AG04449 (cell line): ENCODE measurements at regions of chr10 and their contacts with region 1.

Region 1: DNA sequence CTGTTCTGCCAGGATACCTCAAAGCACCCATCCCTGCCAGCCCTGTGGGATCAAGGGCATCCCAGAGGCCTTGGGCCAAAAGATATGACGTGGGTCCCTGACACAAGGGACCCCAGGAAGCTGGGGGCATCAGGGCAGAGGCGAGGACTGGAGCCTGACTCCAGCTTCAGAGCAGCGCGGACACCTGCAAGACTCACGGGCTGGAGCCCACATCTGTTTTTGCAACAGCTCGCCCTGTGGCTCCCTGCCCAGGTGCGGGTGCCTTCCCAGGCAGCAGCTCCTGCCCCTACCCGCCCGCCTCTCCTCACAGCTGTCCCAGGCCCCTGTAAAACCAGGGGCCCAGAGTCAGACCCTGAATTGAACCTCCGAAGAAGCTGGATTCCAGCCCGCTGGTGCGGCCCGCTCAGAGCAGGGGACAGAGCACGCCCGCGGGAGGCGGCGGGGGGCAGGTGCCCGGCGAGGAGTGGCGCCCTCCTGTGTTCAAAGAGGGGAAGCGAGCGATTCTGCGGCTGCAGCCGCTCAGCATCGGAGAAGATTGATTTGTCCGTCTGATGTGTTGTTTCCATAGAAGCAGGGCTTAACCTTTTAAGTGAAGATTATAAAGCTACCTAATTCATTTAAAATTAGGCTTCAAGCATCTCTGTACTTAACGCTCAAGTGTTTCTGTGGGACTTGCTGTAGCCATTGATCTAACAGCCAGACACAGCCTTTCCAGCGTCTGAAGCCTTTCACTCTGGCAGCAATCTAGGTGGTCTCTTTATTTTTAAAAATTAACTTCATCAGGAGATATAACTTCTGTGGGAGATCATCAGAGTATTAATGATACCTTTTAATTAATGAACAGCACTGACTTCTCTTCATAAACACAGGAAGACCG is 88.4 kb downstream of the BEND7 start:
- DNase-seq: no peak
- H3K4me3 ChIP-seq: peak overlapping the region; percentile 41
- CTCF ChIP-seq: peak; percentile 92

Region 2: DNA sequence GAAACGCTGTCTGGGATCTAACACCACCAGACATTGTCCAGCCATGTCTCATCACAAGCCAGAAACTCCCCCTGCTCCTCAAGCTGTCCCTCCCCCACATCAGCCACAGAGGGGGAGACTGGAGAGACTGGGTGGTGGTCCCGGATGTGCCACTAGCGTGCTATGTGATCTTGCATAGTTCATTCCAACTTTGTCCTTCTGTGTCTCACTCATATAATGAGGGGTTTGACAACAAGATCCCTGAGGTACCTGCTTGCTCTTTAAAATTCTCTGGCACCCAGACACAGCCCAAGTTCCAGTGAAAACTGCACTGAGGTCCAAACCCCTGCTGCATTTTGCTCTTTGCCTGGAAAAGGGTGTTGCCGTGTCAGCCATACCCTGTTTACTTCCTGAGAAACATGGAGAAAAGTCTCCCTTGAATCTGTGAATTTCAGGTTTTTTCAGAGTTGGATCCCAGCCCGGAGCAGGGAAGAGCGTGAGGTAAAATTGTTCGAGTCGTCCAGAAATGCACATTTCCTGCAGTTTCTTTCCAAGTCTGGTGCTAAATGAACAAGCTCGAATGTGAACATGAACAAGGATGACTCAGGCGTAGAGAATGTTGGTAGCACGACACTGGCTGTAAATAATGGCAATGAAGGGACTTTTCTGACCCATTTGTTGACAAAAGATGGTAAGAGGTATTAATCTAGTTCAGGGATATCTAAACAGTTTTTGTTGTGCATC is 595.5 kb before region 1 on chr10:
- CTCF ChIA-PET with region 1: no interaction called
- POLR2A ChIA-PET with region 1: no interaction called
- DNase-seq: peak; percentile 34
- H3K4me3 ChIP-seq: no peak overlapping the region
- CTCF ChIP-seq: no peak

Region 3: GRCh38 chr10:13160934-13161856 is 279.2 kb before region 1 on chr10 and contains the start of gene MCM10:
- CTCF ChIA-PET with region 1: interaction called, 10 read pairs
- POLR2A ChIA-PET with region 1: no interaction called
- DNase-seq: peak; percentile 97
- H3K4me3 ChIP-seq: peak within 1 kb of the TSS; percentile 67
- CTCF ChIP-seq: peak; percentile 82

Region 4: GRCh38 chr10:13348216-13349017 is 92.0 kb before region 1 on chr10 and contains the start of gene SEPHS1:
- CTCF ChIA-PET with region 1: interaction called, 10 read pairs
- POLR2A ChIA-PET with region 1: no interaction called
- DNase-seq: no peak
- H3K4me3 ChIP-seq: peak within 1 kb of the TSS; percentile 72
- CTCF ChIP-seq: no peak

Region 5: GRCh38 chr10:13382703-13383398 is 57.6 kb before region 1 on chr10:
- CTCF ChIA-PET with region 1: interaction called, 11 read pairs
- POLR2A ChIA-PET with region 1: no interaction called
- DNase-seq: no peak
- H3K4me3 ChIP-seq: peak overlapping the region; percentile 15; the same call in 1 of the 2 replicates
- CTCF ChIP-seq: no peak

Region 6: DNA sequence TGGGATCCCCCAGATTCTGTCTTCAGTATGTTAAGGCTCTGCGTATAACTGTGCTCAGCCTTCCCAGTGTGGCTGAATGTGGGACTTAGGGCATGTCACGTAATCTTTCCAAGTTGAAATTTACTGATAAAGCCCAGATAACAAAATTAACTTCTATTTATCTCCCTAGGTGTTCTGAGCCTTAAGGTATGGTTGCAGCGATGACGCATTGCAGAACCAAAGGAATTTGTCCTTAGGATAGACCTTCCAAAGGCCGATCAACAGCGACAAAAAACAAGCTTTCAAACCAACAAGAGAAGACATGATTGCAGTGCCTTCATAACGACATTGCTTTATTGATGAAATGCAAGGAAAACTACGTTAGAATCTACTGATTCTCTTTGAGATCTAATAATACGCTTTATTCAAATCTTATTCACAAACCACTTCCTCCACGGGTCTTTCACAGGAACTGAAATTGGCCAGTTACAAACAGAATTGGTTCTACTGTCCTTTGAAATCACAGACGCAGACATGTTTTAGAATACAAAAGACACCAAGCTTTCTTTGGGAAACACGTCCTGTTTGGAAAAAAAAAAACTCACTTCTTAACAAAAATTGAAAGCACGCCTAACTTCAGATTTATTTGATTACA is 17.7 kb before region 1 on chr10:
- CTCF ChIA-PET with region 1: interaction called, 13 read pairs
- POLR2A ChIA-PET with region 1: no interaction called
- DNase-seq: no peak
- H3K4me3 ChIP-seq: no peak overlapping the region
- CTCF ChIP-seq: no peak

Region 7: DNA sequence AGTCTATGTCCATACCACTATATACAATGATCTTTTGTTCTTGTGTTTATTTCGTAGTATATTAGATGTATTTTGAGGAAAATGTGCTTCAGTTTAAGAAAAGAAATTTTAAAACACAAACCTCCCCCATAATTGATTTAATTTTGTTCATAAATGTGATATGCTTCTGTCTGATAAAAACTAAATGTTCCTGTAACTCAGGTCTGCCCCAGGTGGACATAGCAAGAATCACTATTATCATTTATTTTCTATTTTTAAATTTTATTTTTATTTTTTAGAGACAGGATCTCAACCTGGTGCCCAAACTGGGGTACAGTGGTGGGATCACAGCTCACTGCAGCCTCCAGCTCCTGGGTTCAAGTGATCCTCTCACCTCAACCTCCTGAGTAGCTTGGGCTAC is 45.2 kb after region 1 on chr10:
- CTCF ChIA-PET with region 1: interaction called, 12 read pairs
- POLR2A ChIA-PET with region 1: no interaction called
- DNase-seq: no peak
- H3K4me3 ChIP-seq: no peak overlapping the region
- CTCF ChIP-seq: peak; percentile 31